Tibial artery (tissue), 4 donors: ENCODE measurements at regions of chrX and their contacts with region 1.

Region 1: GRCh38 chrX:23644744-23645143 is 22.5 kb upstream of the PRDX4 start:
- DNase-seq: no peak
- H3K4me3 ChIP-seq: no peak overlapping the region
- H3K27ac ChIP-seq: no peak overlapping the region
- H3K4me1 ChIP-seq: no peaks in the 10 kb centered on the region
- H3K27me3 ChIP-seq: no peaks in the 10 kb centered on the region
- CTCF ChIP-seq: no peak

Region 2: DNA sequence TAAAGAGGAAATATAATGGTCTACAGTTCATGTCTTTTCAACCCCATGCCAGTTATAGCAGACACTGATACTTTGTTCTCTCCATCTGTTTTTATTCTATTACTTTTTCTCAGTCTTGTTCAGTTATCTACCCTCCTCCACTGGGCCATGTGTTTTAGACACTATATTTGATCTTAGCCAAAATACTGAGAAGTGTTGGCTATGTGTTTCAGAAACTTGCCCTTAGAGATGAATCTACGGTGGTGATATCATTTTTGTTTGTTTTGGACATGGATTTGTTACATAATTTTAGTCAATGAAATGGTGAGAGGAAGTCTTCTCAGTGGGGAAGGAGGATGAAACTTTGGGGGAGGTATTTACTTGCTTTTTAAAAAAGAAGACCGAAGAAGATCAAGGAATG is 856.5 kb before region 1 on chrX:
- intact Hi-C with region 1: loop called (anchors 5 kb)
- DNase-seq: no peak
- H3K4me3 ChIP-seq: no peak overlapping the region
- H3K27ac ChIP-seq: no peak overlapping the region
- H3K4me1 ChIP-seq: no peaks in the 10 kb centered on the region
- H3K27me3 ChIP-seq: no peaks in the 10 kb centered on the region
- CTCF ChIP-seq: no peak

Region 3: DNA sequence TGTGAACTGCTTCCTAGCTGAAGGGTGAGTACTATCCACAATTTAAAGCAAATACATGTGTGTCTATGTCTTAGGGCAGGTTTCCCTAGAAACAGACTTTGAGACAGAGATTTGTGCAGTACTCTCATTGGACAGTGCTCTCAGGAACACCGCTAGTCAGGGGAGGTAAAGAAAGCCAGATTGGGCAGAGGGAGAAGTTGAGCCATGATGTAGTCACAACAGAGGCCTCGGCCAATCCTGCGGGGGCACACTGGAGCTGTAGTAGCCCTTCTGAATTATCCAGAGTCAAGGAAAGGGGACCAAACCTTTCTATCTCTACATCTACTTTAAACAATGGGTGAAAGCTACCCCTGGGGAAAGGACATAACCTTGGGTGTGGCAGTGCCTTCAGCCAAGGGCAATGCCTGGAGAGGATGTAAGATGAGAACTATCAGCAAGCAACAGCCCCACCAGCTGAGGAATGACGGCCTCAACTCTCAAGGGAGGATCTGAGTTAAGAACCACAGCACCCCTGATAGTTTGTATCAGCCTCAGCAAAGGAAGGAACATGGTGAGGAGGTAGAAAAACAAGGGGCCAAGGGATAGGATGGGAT is 433.7 kb before region 1 on chrX:
- intact Hi-C with region 1: no loop called
- DNase-seq: no peak
- H3K4me3 ChIP-seq: no peak overlapping the region
- H3K27ac ChIP-seq: no peak overlapping the region
- H3K4me1 ChIP-seq: no peaks in the 10 kb centered on the region
- H3K27me3 ChIP-seq: no peaks in the 10 kb centered on the region
- CTCF ChIP-seq: no peak

Region 4: GRCh38 chrX:23515028-23515427 is 129.7 kb before region 1 on chrX:
- intact Hi-C with region 1: no loop called
- DNase-seq: no peak
- H3K4me3 ChIP-seq: no peak overlapping the region
- H3K27ac ChIP-seq: no peak overlapping the region
- H3K4me1 ChIP-seq: peaks cover 0 to 10% (median 3%) of the 10 kb centered on the region in 4 donors
- H3K27me3 ChIP-seq: no peaks in the 10 kb centered on the region
- CTCF ChIP-seq: no peak